PC-3 (cell line): ENCODE measurements at regions of chr5 and their contacts with region 1.

Region 1: GRCh38 chr5:140547508-140548299 is at the start of gene EIF4EBP3:
- DNase-seq: peak; percentile 95
- ATAC-seq: peak; percentile 92
- H3K4me3 ChIP-seq: no peak within 1 kb of the TSS
- H3K27ac ChIP-seq: peak within 1 kb of the TSS; percentile 15
- H3K4me1 ChIP-seq: peaks cover 15% of the 10 kb centered on the region
- H3K27me3 ChIP-seq: no peaks in the 10 kb centered on the region
- CTCF ChIP-seq: peak; percentile 42
- total RNA-seq, gene EIF4EBP3: not detected in 2 replicates

Region 2: GRCh38 chr5:140639148-140639979 is 91.7 kb after region 1 on chr5 and contains the start of gene TMCO6:
- CTCF ChIA-PET with region 1: interaction called, 4 read pairs
- POLR2A ChIA-PET with region 1: interaction called, 5 read pairs
- intact Hi-C with region 1: loop called (anchors 1 kb)
- DNase-seq: peak; percentile 93
- ATAC-seq: peak; percentile 97
- H3K4me3 ChIP-seq: peak within 1 kb of the TSS; percentile 97
- H3K27ac ChIP-seq: peak within 1 kb of the TSS; percentile 39; the same call in 1 of the 2 replicates
- H3K4me1 ChIP-seq: peaks cover 9% of the 10 kb centered on the region; the same call in 1 of the 2 replicates
- H3K27me3 ChIP-seq: no peaks in the 10 kb centered on the region
- CTCF ChIP-seq: peak; percentile 56
- total RNA-seq, gene TMCO6: 12.7 and 16.5 TPM in 2 replicates

Region 3: GRCh38 chr5:140664359-140665119 is 116.8 kb after region 1 on chr5 and contains the start of gene WDR55:
- CTCF ChIA-PET with region 1: no interaction called
- POLR2A ChIA-PET with region 1: no interaction called
- intact Hi-C with region 1: loop called (anchors 1 kb)
- DNase-seq: peak; percentile 96
- ATAC-seq: peak; percentile 95
- H3K4me3 ChIP-seq: peak within 1 kb of the TSS; percentile 95
- H3K27ac ChIP-seq: peak within 1 kb of the TSS; percentile 87
- H3K4me1 ChIP-seq: peaks cover 20% of the 10 kb centered on the region
- H3K27me3 ChIP-seq: no peaks in the 10 kb centered on the region
- CTCF ChIP-seq: no peak
- total RNA-seq, gene WDR55: 21.2 and 27.2 TPM in 2 replicates

Region 4: GRCh38 chr5:140673187-140673976 is 125.7 kb after region 1 on chr5 and contains the start of gene DND1:
- CTCF ChIA-PET with region 1: no interaction called
- POLR2A ChIA-PET with region 1: interaction called, 12 read pairs
- intact Hi-C with region 1: no loop called
- DNase-seq: no peak
- ATAC-seq: no peak
- H3K4me3 ChIP-seq: no peak within 1 kb of the TSS
- H3K27ac ChIP-seq: no peak within 1 kb of the TSS
- H3K4me1 ChIP-seq: no peaks in the 10 kb centered on the region
- H3K27me3 ChIP-seq: no peaks in the 10 kb centered on the region
- CTCF ChIP-seq: no peak
- total RNA-seq, gene DND1: 0.75 and 1.1 TPM in 2 replicates

Region 5: GRCh38 chr5:140710899-140711552 is 163.3 kb after region 1 on chr5:
- CTCF ChIA-PET with region 1: no interaction called
- POLR2A ChIA-PET with region 1: no interaction called
- intact Hi-C with region 1: loop called (anchors 10 kb)
- DNase-seq: peak; percentile 99
- ATAC-seq: peak; percentile 94
- H3K4me3 ChIP-seq: peak overlapping the region; percentile 91
- H3K27ac ChIP-seq: peak overlapping the region; percentile 85
- H3K4me1 ChIP-seq: peaks cover 8% of the 10 kb centered on the region; the same call in 1 of the 2 replicates
- H3K27me3 ChIP-seq: no peaks in the 10 kb centered on the region
- CTCF ChIP-seq: no peak

Region 6: GRCh38 chr5:140741967-140742366 is 194.3 kb after region 1 on chr5:
- CTCF ChIA-PET with region 1: no interaction called
- POLR2A ChIA-PET with region 1: no interaction called
- intact Hi-C with region 1: no loop called
- DNase-seq: no peak
- ATAC-seq: no peak
- H3K4me3 ChIP-seq: no peak overlapping the region
- H3K27ac ChIP-seq: no peak overlapping the region
- H3K4me1 ChIP-seq: no peaks in the 10 kb centered on the region
- H3K27me3 ChIP-seq: no peaks in the 10 kb centered on the region
- CTCF ChIP-seq: no peak